Body of pancreas (tissue), 4 donors: ENCODE measurements at regions of chr12 and their contacts with region 1.

Region 1: DNA sequence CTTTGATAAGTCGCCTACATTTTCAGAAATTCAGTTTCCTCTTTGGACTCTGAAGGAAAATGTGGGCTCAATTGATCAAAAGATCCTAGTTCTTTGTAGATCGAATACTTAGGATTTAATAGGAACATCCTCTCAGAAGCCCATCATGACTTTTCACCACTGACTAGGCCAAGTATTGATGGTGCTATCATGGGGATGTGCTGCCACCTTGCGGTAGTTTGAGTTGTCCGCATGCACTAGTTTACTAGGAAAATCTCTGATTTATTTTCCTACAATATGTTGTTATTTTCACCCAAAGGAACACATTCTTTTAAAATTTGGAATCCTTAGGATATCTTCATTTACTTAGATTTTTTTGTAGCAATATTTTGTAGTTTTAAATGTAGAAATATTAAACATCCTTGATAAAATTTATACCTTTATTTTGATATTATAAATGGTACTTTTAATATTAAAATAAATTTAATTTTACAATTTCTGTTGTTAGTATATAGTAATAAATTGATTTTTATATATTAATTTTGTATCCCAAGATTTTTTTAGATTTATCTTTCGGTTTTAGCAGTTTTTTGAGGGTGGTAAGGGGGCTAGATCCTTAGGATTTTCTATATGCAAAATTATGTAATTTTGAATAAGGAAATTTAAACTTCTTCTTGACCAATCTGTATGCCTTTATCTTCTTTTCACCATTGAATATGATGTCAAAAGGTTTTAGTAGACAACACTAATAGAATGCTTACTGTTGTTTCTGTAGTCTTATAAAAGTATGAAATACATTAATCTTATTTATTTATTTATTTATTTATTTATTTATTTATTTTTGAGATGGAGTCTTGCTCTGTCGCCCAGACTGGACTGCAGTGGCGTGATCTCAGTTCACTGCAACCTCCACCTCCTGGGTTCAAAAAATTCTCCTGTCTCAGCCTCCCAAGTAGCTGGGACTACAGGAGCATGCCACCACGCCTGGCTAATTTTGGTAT is 52.9 kb upstream of the OR9K2 start:
- DNase-seq: peak; percentile 75 to 82 (median 76)
- ATAC-seq: peak; percentile 40
- H3K4me3 ChIP-seq: no peak overlapping the region
- H3K27ac ChIP-seq: no peak overlapping the region
- H3K4me1 ChIP-seq: no peaks in the 10 kb centered on the region
- H3K27me3 ChIP-seq: peaks cover 0 to 4% of the 10 kb centered on the region in 2 donors
- CTCF ChIP-seq: peak; percentile 51 to 89 (median 81)
- POLR2A ChIP-seq: no peak

Region 2: DNA sequence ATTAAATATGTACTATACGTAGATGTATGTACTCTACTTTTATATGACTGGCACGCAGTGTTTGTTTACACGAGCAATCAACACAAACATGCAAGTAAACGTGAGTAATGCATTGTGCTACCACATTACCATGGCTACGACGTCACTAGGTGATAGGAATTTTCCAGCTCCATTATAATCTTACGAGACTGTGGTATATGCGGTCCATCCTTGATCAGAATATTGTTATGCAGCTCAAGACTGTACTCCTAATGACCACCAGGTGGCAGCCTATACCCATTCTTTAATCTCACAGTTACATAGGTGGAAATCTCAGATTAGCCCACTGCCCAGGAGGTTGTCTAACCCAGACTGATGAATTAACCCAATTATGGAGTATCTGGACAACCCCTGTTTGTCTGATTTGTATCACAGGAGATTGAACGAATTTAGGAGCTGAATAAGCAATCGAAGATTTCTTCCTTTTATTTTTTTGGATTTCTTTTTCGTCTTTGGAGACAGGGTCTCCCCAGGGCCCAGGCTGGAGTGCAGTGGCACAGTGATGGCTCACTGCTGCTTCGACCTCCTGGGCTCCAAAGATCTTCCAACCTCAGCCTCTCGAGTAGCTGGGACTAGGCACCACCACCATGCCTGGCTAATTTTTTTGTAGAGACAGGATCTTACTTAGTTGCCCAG is 80.0 kb before region 1 on chr12:
- intact Hi-C with region 1: loop called (anchors 2 kb)
- DNase-seq: peak; percentile 53 to 71 (median 62)
- ATAC-seq: peak; percentile 64
- H3K4me3 ChIP-seq: no peak overlapping the region
- H3K27ac ChIP-seq: no peak overlapping the region
- H3K4me1 ChIP-seq: no peaks in the 10 kb centered on the region
- H3K27me3 ChIP-seq: no peaks in the 10 kb centered on the region
- CTCF ChIP-seq: peak; percentile 63 to 93 (median 88)
- POLR2A ChIP-seq: no peak